GM13976 (cell line): ENCODE measurements at regions of chr3 and their contacts with region 1.

Region 1: DNA sequence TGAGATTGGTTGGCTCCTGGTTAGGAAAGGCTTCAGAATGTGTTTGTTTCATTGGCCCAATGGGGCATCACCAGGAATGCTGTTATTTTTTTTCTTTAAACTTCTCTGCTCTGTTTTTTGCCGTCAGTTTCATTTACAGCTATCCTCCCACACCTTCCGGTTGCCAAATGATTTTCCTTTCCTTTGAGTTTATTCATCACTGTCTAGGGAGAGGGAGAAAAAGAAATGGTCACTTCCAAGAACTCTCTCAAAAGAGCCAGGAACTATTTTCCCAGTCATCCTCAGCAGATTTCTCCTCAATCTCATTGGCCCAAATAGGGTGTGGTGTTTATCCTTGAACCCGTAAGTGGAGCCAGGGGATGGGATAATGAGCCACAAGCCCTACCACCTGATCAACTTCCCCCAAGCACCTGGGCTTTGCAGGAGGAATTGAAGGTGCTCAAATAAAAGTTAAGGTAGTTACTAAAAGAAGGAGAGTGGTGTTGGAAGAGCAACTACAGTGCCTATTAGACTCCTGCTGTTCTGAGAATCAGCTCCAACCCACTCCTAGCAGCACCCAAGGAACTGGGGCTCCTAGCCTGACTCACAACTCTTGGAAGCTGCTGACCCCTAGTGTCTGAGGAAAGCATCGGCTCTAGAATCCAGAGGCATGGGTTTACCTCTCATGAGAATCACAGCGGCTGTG is 183.8 kb upstream of the IL12A start:
- DNase-seq: peak; percentile 73
- CTCF ChIP-seq: peak; percentile 81

Region 2: DNA sequence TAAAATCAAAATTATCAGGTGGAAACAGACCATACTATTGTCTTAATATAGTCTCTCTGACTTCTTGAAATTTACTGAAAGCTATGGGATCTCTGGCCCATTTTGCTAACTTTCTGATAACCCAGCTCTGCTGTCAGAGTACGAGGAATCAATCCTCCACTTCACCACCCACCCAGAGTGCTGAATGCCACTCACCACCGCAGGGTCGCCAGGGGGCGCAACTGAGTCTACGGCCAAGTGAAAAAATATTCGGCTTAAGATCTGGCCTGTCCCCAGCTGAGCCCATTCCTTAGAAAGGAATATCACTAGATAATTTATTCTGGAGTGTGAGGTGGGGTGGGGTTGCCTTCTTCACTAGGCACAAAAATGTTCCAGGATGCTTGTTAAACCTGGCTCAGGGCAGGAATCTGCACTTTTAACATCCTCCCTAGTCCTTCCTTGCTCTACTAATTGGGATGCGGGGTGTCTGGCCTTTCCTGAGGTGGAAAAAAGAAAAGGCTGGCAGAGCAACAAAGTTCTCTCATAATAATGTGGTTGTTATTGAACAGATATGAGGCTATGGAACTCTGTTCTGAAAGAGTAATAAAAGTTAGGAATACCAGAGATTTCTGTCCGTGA is 482.4 kb before region 1 on chr3:
- in situ Hi-C with region 1: loop called (anchors 10 kb)
- DNase-seq: peak; percentile 48
- CTCF ChIP-seq: peak; percentile 80

Region 3: DNA sequence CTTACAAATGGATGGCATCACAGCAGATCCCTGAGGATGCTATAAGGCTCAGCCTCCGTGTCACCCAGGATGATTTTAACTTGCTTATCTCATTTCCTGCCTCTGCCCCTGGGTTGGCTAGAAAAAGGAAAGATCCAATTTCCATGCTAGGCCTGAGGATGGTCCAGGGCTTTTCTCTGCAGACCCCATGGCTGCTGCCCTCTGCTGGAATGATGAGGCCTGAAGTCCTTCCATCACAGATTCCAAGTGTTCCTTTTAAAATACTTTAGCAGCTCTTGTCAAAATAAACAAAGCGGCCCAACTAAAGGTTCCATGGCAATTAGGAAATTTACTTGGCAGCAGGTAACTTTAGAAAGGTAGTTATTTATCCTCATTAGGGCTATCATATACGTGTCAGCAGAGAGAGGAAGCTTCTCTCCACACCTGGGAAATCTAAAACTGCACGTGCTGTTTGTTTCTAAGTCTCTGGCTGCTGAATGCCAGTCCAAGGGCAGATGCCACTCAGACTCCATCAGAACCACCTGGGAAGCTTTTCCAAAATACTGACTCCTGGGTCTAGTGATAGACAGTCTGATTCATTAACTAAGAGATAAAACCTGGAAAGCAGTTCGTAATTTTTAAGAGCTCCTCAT is 218.2 kb before region 1 on chr3:
- in situ Hi-C with region 1: no loop called
- DNase-seq: no peak
- CTCF ChIP-seq: peak; percentile 6